Panc1 (cell line): ENCODE measurements at regions of chr13 and their contacts with region 1.

Region 1: DNA sequence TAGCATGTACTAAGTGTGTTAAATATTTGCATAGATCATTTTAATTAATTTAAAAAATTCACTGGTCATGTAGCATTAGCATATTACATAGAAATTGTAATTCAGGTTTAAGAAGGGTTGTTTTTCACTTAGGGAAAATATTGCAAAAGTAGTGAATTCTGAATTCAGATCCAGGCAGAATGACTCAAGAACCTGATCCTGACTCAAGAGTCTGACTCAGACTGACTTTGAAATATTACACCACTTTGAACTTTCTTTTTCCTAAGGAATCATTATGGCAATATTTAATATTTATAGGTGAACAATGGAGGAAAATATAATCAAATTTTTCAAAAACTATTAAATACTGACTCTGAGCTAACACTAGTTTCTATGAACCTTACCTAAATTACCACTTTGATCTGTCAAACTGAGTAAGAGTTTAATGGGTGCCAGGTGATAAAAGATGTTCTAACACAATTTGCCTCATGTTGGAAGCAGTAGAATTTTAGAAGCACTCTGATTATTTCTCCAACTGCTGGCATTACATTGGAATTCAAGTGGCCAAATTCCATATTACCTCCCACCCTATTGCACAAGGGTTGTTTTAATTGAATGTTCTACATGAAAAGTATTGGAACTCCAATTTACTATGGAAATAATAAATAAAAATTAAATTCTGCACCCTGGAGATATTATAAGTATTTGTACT is 261.6 kb downstream of the SLITRK1 start:
- DNase-seq: no peak
- ATAC-seq: no peak
- H3K4me3 ChIP-seq: no peak overlapping the region
- H3K27ac ChIP-seq: no peak overlapping the region
- H3K4me1 ChIP-seq: no peaks in the 10 kb centered on the region
- H3K27me3 ChIP-seq: no peaks in the 10 kb centered on the region
- CTCF ChIP-seq: no peak

Region 2: GRCh38 chr13:83469629-83470028 is 151.0 kb before region 1 on chr13:
- CTCF ChIA-PET with region 1: no interaction called
- POLR2A ChIA-PET with region 1: interaction called, 14 read pairs
- in situ Hi-C with region 1: no loop called
- intact Hi-C with region 1: no loop called
- DNase-seq: no peak
- ATAC-seq: no peak
- H3K4me3 ChIP-seq: no peak overlapping the region
- H3K27ac ChIP-seq: no peak overlapping the region
- H3K4me1 ChIP-seq: no peaks in the 10 kb centered on the region
- H3K27me3 ChIP-seq: no peaks in the 10 kb centered on the region
- CTCF ChIP-seq: no peak

Region 3: DNA sequence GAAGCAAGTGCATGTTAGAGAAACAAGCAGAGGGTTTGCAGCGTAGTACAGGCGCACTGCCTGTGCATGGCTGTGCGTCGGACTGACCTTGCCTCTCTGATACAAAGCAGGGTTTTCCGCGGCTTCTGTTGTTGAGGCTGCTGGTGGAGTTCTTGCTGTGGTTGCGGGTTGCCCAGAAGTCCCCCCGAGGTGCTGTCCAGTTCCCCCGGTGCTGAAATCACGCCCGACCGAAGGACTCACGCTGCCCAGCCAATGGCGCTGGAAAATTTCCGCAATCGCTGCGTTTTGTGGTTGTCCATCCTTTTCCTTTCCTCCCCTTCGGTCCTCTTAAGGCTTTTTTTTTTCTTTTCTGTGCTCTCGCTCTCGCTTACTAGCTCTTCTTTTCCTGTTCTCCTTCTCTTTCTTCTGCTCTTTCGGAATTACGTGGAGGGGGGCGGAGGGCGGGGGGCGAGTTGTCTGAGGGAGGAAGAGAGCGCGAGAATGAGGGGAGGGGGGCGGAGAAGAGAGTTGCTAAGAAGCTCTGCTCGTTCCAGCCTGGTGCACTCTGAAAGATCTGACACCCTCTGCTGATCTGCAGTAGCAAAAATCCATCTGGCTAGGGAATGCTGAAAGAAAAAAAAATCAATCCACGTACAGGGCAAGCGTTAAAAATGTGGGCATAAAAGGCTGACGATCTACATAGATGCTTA is 261.4 kb after region 1 on chr13 and contains the start of gene SLITRK1:
- CTCF ChIA-PET with region 1: no interaction called
- POLR2A ChIA-PET with region 1: interaction called, 15 read pairs
- in situ Hi-C with region 1: no loop called
- intact Hi-C with region 1: no loop called
- DNase-seq: no peak
- ATAC-seq: peak; percentile 66
- H3K4me3 ChIP-seq: peak within 1 kb of the TSS; percentile 40 to 52
- H3K27ac ChIP-seq: no peak within 1 kb of the TSS
- H3K4me1 ChIP-seq: no peaks in the 10 kb centered on the region
- H3K27me3 ChIP-seq: 0 out of 2 replicates have a peak, but pooled peaks cover 2% of the 10 kb centered on the region
- CTCF ChIP-seq: no peak
- total RNA-seq, gene SLITRK1: 0.08 TPM